ENCODE measurements at regions of chr14 and their contacts with region 1.

Region 1: GRCh38 chr14:31154956-31155355 is 52.6 kb downstream of the HECTD1 start:
- DNase-seq: no peak
- H3K4me3 ChIP-seq: no peak overlapping the region
- H3K27ac ChIP-seq: no peak overlapping the region
- H3K4me1 ChIP-seq: no peaks in the 10 kb centered on the region
- H3K27me3 ChIP-seq: no peaks in the 10 kb centered on the region
- CTCF ChIP-seq: no peak

Region 2: GRCh38 chr14:31118892-31119291 is 36.1 kb before region 1 on chr14:
- CTCF ChIA-PET with region 1: no interaction called
- dilution Hi-C with region 1: no loop called
- in situ Hi-C with region 1: loop called in 1 of 2 experiments (anchors 5 kb)
- intact Hi-C with region 1: no loop called
- DNase-seq: no peak
- H3K4me3 ChIP-seq: no peak overlapping the region
- H3K27ac ChIP-seq: no peak overlapping the region
- H3K4me1 ChIP-seq: no peaks in the 10 kb centered on the region
- H3K27me3 ChIP-seq: no peaks in the 10 kb centered on the region
- CTCF ChIP-seq: no peak

Measured in mammary epithelial cell (primary cell).